Psoas muscle (tissue), 8 donors: ENCODE measurements at regions of chr2 and their contacts with region 1.

Region 1: DNA sequence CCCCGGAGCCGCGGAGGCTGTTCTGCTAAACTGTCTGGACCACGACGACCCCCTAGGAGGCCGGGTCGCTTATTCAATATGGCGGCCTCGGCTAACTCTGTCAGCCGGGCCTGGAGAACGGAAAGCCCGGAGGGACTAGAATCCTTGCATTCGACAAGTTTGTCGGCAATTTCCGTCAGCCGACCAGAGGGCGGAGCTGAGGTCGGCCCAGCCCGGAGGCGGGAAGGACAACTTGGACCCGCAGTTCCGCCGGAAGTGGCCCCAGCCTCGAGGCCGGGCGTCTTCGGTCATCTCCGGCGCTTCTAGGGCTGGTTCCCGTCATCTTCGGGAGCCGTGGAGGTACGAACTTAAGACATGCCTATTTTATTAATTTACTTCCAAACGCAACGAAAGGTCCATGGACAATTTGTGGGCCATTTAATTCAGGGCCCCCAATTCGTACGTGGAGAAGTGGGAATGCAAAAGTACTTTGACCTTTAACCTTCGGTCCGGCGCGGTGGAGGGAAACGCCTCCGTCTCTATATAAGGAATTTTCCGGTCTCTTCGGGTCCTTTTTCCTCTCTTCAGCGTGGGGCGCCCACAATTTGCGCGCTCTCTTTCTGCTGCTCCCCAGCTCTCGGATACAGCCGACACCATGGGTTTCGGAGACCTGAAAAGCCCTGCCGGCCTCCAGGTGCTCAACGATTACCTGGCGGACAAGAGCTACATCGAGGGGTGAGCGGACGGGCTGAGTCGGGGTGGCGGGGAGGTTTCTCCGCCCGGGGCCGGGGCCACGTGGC is at the starts of genes EEF1B2 and NDUFS1:
- DNase-seq: peak; percentile 97 to 99
- ATAC-seq: peak; percentile 93 to 96 (median 94)
- H3K4me3 ChIP-seq: peak within 1 kb of the TSS; percentile 89
- H3K27ac ChIP-seq: peak within 1 kb of the TSS; percentile 90
- H3K4me1 ChIP-seq: peaks cover 28% of the 10 kb centered on the region
- H3K27me3 ChIP-seq: no peaks in the 10 kb centered on the region
- CTCF ChIP-seq: no peak
- total RNA-seq, gene EEF1B2: 340 to 862 (median 568) TPM
- total RNA-seq, gene NDUFS1: 231 to 420 (median 293) TPM

Region 2: GRCh38 chr2:206023183-206023582 is 136.4 kb before region 1 on chr2:
- intact Hi-C with region 1: loop called in 1 of 2 experiments (anchors 10 kb)
- DNase-seq: no peak
- ATAC-seq: no peak
- H3K4me3 ChIP-seq: no peak overlapping the region
- H3K27ac ChIP-seq: no peak overlapping the region
- H3K4me1 ChIP-seq: no peaks in the 10 kb centered on the region
- H3K27me3 ChIP-seq: no peaks in the 10 kb centered on the region
- CTCF ChIP-seq: no peak

Region 3: DNA sequence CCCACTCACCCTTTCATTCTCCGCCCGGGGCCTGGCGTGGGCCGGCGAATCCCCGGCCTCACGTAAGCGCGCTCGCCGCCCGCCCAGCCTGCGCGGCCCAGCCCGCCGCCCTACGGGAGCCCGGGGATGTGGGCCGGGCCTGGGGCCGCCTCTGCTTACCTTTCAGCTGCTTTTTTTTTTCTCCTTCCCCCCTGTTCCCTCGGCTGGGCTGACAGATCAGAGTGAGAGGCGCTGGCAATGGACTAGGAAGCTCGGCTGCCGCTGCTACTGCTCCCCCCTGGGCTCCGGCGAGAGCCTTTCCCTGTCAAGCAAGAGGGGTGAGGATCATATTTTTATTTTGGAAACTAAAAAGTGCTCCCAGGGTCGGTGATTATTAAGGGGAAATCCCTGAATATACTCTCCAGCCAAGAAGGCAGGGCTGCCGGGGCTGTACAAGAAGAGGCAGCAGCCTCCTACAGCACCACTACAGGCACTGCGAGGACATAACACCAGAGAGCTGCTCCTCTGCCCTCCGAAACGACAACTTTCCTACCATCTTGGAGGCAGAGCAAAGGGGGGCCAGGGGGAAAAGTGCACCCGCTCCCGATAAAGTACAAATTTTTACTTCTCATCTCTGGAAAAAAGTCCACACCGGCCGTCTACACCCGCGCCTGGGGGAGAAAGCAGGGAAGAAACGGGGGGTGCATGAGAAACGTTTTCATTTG is 73.6 kb before region 1 on chr2 and contains the start of gene INO80D:
- intact Hi-C with region 1: loop called in 1 of 2 experiments (anchors 5 kb)
- DNase-seq: peak; percentile 73 to 86
- ATAC-seq: peak; percentile 84 to 90 (median 88)
- H3K4me3 ChIP-seq: peak within 1 kb of the TSS; percentile 88
- H3K27ac ChIP-seq: peak within 1 kb of the TSS; percentile 96
- H3K4me1 ChIP-seq: peaks cover 8% of the 10 kb centered on the region
- H3K27me3 ChIP-seq: no peaks in the 10 kb centered on the region
- CTCF ChIP-seq: peak; percentile 40
- total RNA-seq, gene INO80D: 15.4 to 17.7 (median 16.5) TPM

Region 4: DNA sequence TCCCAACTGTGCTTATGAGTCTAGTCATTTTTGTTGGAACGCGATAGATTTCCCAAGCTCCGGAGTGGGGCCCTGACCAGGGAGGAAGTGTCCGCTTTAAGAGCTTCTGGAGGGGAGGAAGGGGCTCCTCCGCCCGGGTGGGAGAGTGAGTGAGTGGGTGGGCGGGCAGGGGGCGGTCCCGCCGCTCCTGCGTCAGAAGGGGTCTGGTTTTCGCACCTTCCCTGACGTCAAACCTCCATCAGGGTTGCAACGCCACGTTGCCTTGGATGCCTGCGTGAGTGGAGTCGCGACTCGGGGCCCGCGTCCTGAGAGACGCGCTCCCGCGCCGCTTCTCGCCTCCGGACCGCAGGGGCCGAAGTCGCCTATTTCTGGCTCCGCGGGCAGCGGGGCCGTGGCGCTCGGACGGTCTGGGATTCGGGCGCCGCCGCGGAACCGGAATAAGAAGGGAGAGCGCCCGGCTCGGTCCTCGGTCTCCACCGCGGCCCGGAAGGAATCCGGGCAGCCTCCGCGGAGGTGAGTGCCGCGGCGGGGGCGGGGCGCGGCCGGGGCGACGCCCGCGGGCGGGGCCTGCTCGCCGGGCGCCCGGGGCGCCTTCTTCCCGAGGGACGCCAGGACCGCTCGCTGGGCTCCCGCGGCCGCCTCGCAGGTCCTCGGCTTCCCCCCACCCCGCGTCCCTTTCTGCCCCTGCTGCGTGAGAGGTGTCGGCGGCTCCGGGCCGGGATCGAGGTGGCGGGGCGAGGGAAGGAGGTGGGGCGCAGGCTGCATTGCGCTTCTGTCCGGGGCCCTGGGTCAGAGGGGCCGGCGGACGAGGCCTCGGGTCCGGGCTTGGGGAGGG is 115.1 kb after region 1 on chr2 and contains the start of gene ZDBF2:
- intact Hi-C with region 1: loop called in 1 of 2 experiments (anchors 5 kb)
- DNase-seq: peak; percentile 48 to 70
- ATAC-seq: peak; percentile 91 to 92 (median 92)
- H3K4me3 ChIP-seq: peak within 1 kb of the TSS; percentile 83
- H3K27ac ChIP-seq: peak within 1 kb of the TSS; percentile 78
- H3K4me1 ChIP-seq: no peaks in the 10 kb centered on the region
- H3K27me3 ChIP-seq: peaks cover 0 to 49% (median 6%) of the 10 kb centered on the region in 3 donors
- CTCF ChIP-seq: no peak
- total RNA-seq, gene ZDBF2: 7.1 to 20.8 (median 15.3) TPM

Region 5: DNA sequence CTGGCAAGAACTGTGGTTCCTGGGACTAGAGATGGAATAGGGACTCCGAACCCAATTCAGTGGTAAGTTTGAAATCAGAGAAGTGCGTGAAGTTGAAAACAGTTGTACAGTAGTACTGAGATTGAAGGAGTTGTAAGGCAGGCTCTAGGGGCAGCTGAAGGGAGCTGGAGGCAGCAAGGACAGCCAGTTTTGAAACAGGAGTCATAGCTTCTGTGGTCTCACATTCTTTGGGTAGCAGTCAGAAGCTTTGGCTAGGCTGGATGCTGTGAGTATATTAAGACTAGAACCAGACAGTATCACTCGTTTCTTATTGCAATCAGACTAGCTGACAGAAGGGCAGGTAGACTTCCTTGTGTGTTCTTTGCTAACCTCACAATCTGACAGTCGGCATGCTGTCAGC is 219.3 kb after region 1 on chr2:
- intact Hi-C with region 1: loop called in 1 of 2 experiments (anchors 10 kb)
- DNase-seq: no peak
- ATAC-seq: peak; percentile 95 to 98 (median 98)
- H3K4me3 ChIP-seq: peak overlapping the region; percentile 45
- H3K27ac ChIP-seq: peak overlapping the region; percentile 88
- H3K4me1 ChIP-seq: peaks cover 18% of the 10 kb centered on the region
- H3K27me3 ChIP-seq: no peaks in the 10 kb centered on the region
- CTCF ChIP-seq: no peak

Region 6: GRCh38 chr2:206442833-206443734 is 283.5 kb after region 1 on chr2 and contains the start of gene ADAM23:
- intact Hi-C with region 1: loop called in 1 of 2 experiments (anchors 10 kb)
- DNase-seq: peak; percentile 54 to 77
- ATAC-seq: peak; percentile 73 to 92 (median 80)
- H3K4me3 ChIP-seq: peak within 1 kb of the TSS; percentile 79
- H3K27ac ChIP-seq: peak within 1 kb of the TSS; percentile 70
- H3K4me1 ChIP-seq: peaks cover 13% of the 10 kb centered on the region
- H3K27me3 ChIP-seq: no peaks in the 10 kb centered on the region
- CTCF ChIP-seq: peak; percentile 27
- total RNA-seq, gene ADAM23: 6.0 to 9.2 (median 6.3) TPM

Region 7: DNA sequence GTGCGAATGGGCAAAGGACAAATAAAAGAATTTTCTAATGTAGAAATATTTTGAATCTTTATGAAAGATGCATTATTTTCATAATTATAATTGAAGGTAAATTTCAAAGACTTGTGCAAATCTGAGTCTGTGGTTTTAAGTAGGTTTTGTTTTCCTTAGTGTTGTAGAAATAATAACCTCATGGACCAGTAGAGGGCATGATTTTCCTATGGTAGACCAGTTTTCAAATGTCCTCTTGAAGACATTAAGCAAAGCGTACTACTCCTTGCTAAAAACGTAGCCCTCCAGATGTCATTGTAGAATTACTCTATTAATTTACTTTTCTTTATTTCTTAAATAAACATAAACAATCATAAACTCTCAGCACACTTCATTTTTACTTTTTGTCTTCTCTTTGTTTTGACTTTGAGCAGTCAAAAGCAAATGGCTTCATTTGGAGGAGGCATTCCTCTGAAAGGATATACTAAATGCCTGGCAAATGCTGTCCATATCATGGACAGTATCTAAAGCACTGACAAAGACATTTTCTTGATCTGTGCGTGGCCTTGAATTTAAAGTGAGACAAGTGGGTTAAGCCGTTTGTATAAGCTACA is 396.9 kb after region 1 on chr2:
- intact Hi-C with region 1: loop called in 1 of 2 experiments (anchors 5 kb)
- DNase-seq: no peak
- ATAC-seq: peak in 1 of 4 donors; percentile 65
- H3K4me3 ChIP-seq: no peak overlapping the region
- H3K27ac ChIP-seq: no peak overlapping the region
- H3K4me1 ChIP-seq: no peaks in the 10 kb centered on the region
- H3K27me3 ChIP-seq: no peaks in the 10 kb centered on the region
- CTCF ChIP-seq: peak; percentile 54